Calu3 (cell line): ENCODE measurements at regions of chr11 and their contacts with region 1.

Region 1: GRCh38 chr11:2196970-2197770 is 25.6 kb upstream of the TH start:
- DNase-seq: peak; percentile 90
- H3K4me3 Mint-ChIP-seq: no peak overlapping the region
- H3K27ac Mint-ChIP-seq: no peak overlapping the region
- H3K4me1 Mint-ChIP-seq: peaks cover 10% of the 10 kb centered on the region
- H3K27me3 Mint-ChIP-seq: peaks cover 31% of the 10 kb centered on the region
- CTCF ChIP-seq: peak; percentile 89

Region 2: DNA sequence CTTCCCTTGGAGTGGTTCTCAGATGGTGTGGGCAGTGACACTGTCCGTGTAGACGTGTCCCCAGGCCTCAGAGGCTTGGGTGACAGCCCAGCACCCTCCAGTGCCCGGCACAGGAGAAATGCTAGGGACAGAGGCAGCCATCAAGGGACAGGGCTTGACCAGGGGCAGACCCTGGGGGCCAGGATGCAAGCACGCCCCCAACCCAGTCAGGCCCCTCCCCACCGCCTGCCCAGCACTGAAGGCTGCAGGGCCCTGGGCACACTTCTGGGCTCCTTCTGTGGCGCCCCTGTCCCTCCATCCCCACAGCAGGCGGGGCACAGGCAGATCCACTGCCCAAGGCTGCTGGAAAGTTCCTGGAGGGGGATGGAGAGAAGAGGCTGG is 69.0 kb before region 1 on chr11:
- CTCF ChIA-PET with region 1: no interaction called
- intact Hi-C with region 1: no loop called
- DNase-seq: no peak
- H3K4me3 Mint-ChIP-seq: no peak overlapping the region
- H3K27ac Mint-ChIP-seq: no peak overlapping the region
- H3K4me1 Mint-ChIP-seq: no peaks in the 10 kb centered on the region
- H3K27me3 Mint-ChIP-seq: peaks cover 73% of the 10 kb centered on the region
- CTCF ChIP-seq: no peak

Region 3: DNA sequence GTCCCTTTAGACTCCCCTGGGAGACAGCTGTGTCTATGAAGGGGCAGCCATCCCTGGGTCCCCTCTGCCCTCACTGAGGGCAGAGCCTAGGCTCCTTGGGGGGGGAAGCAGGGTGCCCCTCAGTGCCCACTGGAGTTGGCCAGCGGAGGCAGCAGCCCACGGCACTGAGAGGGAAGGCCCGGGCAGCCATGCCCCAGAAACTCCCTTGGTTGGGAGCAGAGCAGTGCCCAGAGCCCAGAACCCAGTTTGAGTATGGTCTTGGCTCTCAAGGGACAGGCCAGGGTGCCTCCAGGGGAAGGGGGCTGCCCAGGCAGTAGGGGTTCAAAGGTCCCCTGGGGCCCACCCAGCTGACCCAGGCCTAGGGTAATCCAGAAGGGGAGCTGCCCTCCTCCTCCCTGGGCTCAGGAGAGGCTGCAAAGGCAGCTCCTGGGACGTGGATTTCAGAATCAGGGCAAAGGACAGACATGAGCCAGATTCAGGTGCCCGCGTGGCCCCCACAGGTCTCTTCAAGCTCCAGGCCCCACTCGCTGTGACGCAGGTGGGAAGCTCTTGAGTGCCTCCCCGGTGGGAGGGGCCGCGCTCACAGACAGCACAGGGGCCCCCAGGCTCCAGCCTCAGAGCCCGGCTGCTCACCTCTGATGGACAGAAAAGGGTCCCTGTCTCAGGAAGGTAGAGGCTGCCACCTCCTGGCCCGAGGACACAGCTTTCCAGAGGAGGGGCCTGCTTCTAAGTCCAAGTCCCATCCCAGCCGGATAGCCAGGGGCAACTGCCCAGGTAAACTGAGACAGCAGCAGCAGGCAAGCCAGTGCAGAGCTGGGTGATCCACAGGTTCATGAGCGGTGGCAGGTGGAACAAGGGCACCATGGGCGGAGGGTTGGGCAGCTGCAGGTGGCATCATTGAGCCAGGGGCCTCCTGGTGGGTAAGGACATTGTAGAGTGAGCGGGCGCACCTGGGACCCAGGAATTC is 101.9 kb after region 1 on chr11:
- CTCF ChIA-PET with region 1: interaction called, 13 read pairs
- intact Hi-C with region 1: loop called (anchors 1 kb)
- DNase-seq: peak; percentile 69
- H3K4me3 Mint-ChIP-seq: no peak overlapping the region
- H3K27ac Mint-ChIP-seq: no peak overlapping the region
- H3K4me1 Mint-ChIP-seq: no peaks in the 10 kb centered on the region
- H3K27me3 Mint-ChIP-seq: peaks cover 57% of the 10 kb centered on the region
- CTCF ChIP-seq: peak; percentile 66

Region 4: GRCh38 chr11:2420502-2421225 is 223.5 kb after region 1 on chr11:
- CTCF ChIA-PET with region 1: interaction called, 5 read pairs
- intact Hi-C with region 1: loop called (anchors 5 kb)
- DNase-seq: peak; percentile 84
- H3K4me3 Mint-ChIP-seq: no peak overlapping the region
- H3K27ac Mint-ChIP-seq: no peak overlapping the region
- H3K4me1 Mint-ChIP-seq: no peaks in the 10 kb centered on the region
- H3K27me3 Mint-ChIP-seq: peaks cover 29% of the 10 kb centered on the region
- CTCF ChIP-seq: peak; percentile 90